ENCODE measurements at regions of chr6 and their contacts with region 1.

Region 1: DNA sequence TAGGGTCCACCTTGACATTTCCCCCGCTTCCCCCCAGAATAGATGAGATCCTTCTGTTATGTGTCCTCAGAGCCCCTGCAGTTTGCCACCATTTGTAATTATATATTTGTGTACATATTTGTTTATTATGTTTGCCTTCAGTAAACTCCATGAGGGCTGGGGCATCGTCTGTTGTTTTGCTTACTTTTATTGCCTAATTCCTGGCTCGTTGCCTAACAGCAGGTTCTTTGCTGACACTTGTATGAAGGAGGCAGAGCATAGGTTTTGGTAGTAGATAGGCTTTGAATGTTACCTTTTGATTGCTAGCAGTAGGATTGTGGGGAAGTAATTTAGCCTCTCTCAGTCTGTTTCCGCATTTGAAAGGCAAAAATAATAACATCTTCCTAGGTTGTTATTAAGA is 9.9 kb downstream of the MAP3K4 start:
- DNase-seq: no peak
- CTCF ChIP-seq: no peak

Region 2: GRCh38 chr6:161011492-161012480 is 10.4 kb after region 1 on chr6:
- CTCF ChIA-PET with region 1: interaction called, 50 read pairs
- POLR2A ChIA-PET with region 1: no interaction called
- DNase-seq: no peak
- CTCF ChIP-seq: no peak